K562 (cell line): ENCODE measurements at regions of chr17 and their contacts with region 1.

Region 1: DNA sequence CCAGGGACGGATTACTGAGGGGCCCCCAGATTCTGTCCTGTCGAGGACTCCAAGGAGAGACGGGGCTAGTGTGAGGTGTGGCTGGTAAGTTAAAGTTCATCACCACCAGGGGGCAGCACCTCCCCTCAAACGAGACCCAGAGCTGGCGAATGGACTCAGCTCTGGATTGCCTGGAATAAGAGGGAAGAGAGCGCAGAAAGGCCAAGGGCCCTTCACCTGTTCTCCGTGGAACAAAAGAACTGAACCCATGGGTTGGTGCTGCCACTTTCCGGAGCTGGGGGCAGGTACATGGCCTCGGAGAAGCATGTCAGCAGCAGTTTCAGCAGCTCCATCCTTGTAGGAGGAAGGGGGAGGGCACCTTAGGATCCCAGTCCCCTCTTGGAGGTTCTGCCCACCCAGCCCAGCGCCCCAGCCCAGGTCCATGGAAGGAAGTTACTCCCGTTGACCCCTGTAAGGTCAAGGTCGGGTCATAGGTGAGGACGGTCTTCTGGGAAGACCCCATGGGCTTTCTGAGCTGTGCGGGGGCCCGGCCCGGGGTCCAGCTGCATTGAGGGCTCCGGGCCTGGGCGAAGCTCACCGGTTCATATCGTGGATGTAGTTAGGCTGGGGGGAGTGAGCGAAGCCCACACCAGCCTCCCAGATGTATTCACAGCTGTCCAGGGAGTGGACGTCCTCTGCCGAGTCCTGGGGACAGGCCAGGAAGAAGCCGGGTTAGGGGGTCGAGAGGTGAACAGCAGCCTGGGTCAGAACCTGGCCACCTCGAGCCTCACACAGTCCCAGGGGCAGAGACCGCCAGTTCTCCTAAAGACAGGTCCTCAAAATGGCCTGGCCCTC is 10.7 kb downstream of the HID1 start:
- DNase-seq: peak; percentile 81 to 92 (median 84)
- ATAC-seq: peak; percentile 87
- H3K4me3 ChIP-seq: no peak overlapping the region
- H3K27ac ChIP-seq: no peak overlapping the region
- H3K4me1 ChIP-seq: peaks cover 10 to 49% of the 10 kb centered on the region in 2 experiments; a peak in 4 of 5 replicates
- H3K27me3 ChIP-seq: no peaks in the 10 kb centered on the region
- CTCF ChIP-seq: peak; percentile 74 to 85 (median 84)
- EP300 ChIP-seq: no peak
- POLR2A ChIP-seq: no peak
- RAD21 ChIP-seq: peak; percentile 96 to 99

Region 2: DNA sequence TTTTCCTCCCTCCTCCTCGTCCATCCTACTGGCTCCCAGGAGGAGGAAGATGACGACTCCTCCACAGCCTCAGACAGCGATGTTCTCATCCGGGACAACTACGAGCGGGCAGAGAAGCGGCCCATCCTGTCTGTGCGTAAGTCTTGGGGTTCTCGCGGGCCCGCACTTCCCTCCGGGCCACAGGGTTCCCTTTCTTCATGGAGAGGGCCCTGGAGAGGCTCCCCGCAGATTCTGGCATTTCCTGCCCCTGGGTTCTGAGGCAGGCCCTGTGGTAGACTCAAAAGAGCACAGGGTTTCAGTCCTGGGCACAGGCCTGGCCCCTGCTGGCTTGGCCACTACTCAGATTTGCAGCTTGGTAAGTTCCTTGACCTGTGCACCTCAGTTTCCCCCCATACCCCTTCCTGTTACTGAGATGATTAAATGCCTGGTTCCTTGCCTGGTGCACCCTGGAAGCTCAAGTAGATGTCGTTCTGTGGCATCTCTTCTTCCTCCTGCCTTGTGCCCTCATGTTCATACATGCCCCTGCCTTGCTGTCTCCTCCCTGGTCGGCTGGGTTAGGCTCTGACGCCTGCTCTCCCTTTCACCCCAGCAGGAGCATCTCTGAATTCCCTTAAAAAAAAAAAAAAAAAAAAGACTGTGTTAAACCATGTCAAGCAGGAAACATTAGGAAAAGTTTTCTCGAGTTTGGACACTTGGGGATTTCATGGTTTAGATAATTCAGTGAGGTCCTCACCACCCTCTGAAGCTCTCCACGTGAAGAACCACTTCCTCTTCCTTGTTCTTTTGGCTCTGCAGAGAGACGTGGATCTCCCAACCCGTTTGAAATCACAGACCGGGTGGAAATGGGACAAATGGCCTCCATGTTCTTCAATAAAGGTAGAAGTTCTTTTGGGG is 171.5 kb before region 1 on chr17:
- CTCF ChIA-PET with region 1: interaction called, 70 read pairs
- POLR2A ChIA-PET with region 1: interaction called, 3 read pairs
- in situ Hi-C with region 1: loop called (anchors 5 kb)
- intact Hi-C with region 1: loop called (anchors 1 kb)
- DNase-seq: no peak
- ATAC-seq: no peak
- H3K4me3 ChIP-seq: no peak overlapping the region
- H3K27ac ChIP-seq: no peak overlapping the region
- H3K4me1 ChIP-seq: peaks cover 0 to 4% of the 10 kb centered on the region in 2 experiments; a peak in 1 of 5 replicates
- H3K27me3 ChIP-seq: no peaks in the 10 kb centered on the region
- CTCF ChIP-seq: no peak
- EP300 ChIP-seq: no peak
- POLR2A ChIP-seq: no peak
- RAD21 ChIP-seq: no peak

Region 3: DNA sequence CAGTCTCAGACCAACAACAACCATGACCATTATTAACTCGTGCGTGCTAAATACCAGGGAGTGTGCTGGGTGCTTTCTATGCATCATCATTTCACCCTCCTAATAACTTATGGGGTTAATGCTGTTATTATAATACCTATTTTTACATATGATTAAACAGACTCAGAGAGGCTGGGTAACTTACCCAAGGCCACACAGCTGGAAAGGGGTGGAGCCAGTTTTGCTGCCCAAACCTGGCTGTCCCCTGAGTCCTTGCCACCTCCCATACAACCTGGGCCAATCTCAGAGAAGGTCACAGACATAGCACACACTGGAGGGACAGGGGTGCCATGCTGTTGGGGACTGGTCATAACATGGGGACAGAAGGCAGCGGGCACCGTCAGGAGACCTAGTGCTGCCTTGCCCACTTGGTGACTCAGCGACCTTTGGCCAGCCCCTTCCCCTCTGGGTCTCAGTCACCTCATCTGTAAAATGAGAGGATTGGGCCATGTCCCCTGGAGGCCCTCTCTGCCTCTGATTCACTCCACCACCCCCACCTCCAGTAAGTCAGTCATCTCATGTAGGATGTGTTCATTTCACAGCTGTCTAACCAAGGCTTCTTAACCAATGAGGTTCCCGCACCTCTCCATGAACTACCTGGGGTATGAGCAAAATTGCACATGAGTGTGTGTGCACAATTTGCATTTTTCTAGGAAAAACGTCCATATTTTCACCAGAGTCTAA is 57.0 kb before region 1 on chr17:
- CTCF ChIA-PET with region 1: no interaction called
- POLR2A ChIA-PET with region 1: no interaction called
- in situ Hi-C with region 1: no loop called
- intact Hi-C with region 1: no loop called
- DNase-seq: no peak
- ATAC-seq: no peak
- H3K4me3 ChIP-seq: no peak overlapping the region
- H3K27ac ChIP-seq: no peak overlapping the region
- H3K4me1 ChIP-seq: no peaks in the 10 kb centered on the region; a peak in 1 of 5 replicates
- H3K27me3 ChIP-seq: peaks cover 10 to 24% of the 10 kb centered on the region in 2 experiments; a peak in 4 of 5 replicates
- CTCF ChIP-seq: no peak
- EP300 ChIP-seq: no peak
- POLR2A ChIP-seq: no peak
- RAD21 ChIP-seq: no peak

Region 4: GRCh38 chr17:74923533-74924249 is 38.2 kb before region 1 on chr17:
- CTCF ChIA-PET with region 1: interaction called, 86 read pairs
- POLR2A ChIA-PET with region 1: interaction called, 7 read pairs
- in situ Hi-C with region 1: loop called (anchors 5 kb)
- intact Hi-C with region 1: loop called (anchors 1 kb)
- DNase-seq: peak; percentile 82 to 91 (median 89)
- ATAC-seq: peak; percentile 87
- H3K4me3 ChIP-seq: peak overlapping the region; percentile 53
- H3K27ac ChIP-seq: peak overlapping the region; percentile 66; the same call in 2 of the 3 replicates
- H3K4me1 ChIP-seq: peaks cover 18 to 55% of the 10 kb centered on the region in 2 experiments
- H3K27me3 ChIP-seq: peaks cover 9 to 30% of the 10 kb centered on the region in 2 experiments; a peak in 4 of 5 replicates
- CTCF ChIP-seq: peak; percentile 66 to 95 (median 82)
- EP300 ChIP-seq: no peak
- POLR2A ChIP-seq: no peak
- RAD21 ChIP-seq: peak; percentile 76 to 84

Region 5: DNA sequence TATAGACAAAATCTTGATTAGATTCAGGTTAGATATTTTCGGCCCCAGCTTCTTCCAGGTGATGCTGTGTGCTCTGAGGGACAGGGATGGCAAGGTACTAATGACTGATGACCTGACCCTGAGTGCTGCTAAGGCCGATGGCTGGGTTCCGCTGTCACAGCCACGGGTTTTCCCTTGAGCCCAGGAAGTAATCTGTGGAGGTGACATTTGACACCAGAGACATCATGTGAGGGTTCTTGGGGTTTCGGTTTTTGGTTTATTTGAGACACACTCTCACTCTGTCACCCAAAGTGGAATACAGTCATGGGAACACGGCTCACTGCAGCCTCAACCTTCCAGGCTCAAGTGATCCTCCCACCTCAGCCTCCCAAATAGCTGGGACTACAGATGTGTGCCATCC is 16.3 kb before region 1 on chr17:
- CTCF ChIA-PET with region 1: no interaction called
- POLR2A ChIA-PET with region 1: no interaction called
- in situ Hi-C with region 1: no loop called
- intact Hi-C with region 1: no loop called
- DNase-seq: no peak
- ATAC-seq: no peak
- H3K4me3 ChIP-seq: no peak overlapping the region
- H3K27ac ChIP-seq: no peak overlapping the region
- H3K4me1 ChIP-seq: peaks cover 0 to 19% of the 10 kb centered on the region in 2 experiments; a peak in 2 of 5 replicates
- H3K27me3 ChIP-seq: peaks cover 37 to 80% of the 10 kb centered on the region in 2 experiments
- CTCF ChIP-seq: no peak
- EP300 ChIP-seq: no peak
- POLR2A ChIP-seq: no peak
- RAD21 ChIP-seq: no peak

Region 6: DNA sequence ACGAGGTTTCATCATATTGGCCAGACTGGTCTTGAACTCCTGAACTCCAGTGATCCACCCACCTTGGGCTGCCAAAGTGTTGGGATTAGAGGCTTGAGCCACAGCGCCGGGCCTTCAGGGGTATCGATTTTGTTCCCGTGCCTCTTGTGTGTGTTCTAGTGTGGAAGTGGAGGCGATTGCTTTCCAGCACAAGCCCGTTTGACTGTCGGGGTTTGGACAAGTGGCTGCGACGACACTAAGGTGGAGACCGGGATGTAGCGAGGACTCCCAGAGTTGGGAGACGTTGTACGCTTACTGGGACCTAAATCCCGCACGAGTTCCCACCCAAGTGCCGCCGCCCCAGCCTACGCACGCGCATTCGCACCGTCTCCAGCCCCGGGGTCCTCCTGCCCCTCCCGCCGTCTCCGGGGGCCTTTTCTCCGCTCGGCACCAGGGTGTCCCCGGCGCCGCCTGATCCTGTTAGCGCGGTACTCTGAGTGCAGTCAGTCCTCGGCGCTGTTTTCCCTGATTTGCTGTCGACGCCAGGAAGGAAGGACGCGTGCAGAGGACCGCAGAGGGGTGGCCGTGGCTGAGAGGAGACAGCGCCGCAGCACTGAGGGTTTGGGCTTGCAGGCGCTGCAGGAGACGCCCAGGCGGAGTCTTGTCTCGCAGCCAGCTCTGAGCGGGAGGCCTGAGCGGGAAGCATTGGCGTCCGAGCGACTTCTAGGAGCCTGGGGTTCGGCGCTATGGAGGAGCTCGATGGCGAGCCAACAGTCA is 243.3 kb after region 1 on chr17 and contains the start of gene NUP85:
- CTCF ChIA-PET with region 1: interaction called, 15 read pairs
- POLR2A ChIA-PET with region 1: interaction called, 4 read pairs
- in situ Hi-C with region 1: no loop called
- intact Hi-C with region 1: loop called (anchors 1 kb)
- DNase-seq: peak; percentile 96 to 100 (median 98)
- ATAC-seq: peak; percentile 87
- H3K4me3 ChIP-seq: peak within 1 kb of the TSS; percentile 67
- H3K27ac ChIP-seq: peak within 1 kb of the TSS; percentile 99
- H3K4me1 ChIP-seq: peaks cover 0 to 12% of the 10 kb centered on the region in 2 experiments; a peak in 3 of 5 replicates
- H3K27me3 ChIP-seq: no peaks in the 10 kb centered on the region
- CTCF ChIP-seq: no peak
- EP300 ChIP-seq: no peak; the same call in 1 of the 2 replicates
- POLR2A ChIP-seq: peak; percentile 94
- RAD21 ChIP-seq: peak in 1 of 2 experiments; percentile 21; a peak in 3 of 4 replicates
- polyA plus RNA-seq, gene NUP85: 156 to 177 TPM

Region 7: DNA sequence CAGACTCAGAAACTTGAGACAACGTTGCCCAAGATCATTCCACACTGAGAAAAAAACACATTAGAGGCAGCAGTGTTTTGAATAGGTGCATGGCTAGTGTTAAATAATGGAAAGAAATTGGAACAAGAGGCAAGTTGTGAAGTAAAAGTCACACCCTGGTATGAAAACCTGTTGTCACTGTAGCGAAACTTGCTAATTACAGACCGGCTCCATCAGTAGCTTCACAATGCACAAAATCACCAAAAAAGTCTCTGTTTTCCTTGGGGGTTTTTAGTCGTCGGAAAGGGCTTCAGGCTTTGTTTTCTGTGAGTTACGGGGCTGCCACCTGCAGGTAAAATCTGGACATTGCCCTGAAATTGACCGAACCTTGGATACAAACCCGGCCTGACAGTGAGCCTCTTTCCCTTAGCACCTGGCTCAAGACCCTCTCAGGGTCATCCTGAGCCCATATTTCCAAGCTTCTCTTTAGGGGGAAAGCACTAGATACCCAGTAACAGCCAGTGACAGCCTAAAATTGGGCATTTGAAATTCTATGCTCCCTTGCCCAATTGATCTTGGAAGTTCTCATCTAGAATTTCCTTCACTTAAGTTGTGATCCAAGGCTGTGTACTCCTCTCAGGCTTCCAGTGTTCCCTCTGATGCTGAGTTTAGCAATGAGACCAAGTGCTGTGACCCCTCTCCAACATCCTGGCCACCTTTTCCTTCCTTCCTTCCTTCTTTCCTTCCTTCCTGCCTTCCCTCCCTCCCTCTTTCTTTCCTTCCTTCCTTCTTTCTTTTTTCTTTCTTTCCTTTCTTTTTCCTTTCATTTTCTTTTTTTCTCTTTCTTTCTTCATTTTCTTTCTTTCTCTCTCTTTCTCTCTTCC is 450.8 kb after region 1 on chr17:
- CTCF ChIA-PET with region 1: no interaction called
- POLR2A ChIA-PET with region 1: no interaction called
- in situ Hi-C with region 1: no loop called
- intact Hi-C with region 1: loop called (anchors 2 kb)
- DNase-seq: peak; percentile 69 to 84 (median 72)
- ATAC-seq: peak; percentile 92
- H3K4me3 ChIP-seq: no peak overlapping the region
- H3K27ac ChIP-seq: no peak overlapping the region
- H3K4me1 ChIP-seq: no peaks in the 10 kb centered on the region
- H3K27me3 ChIP-seq: peaks cover 0 to 9% of the 10 kb centered on the region in 2 experiments; a peak in 2 of 5 replicates
- CTCF ChIP-seq: peak; percentile 88 to 92 (median 91)
- EP300 ChIP-seq: no peak
- POLR2A ChIP-seq: no peak
- RAD21 ChIP-seq: peak; percentile 94 to 98